Naive thymus-derived CD4-positive, alpha-beta T cell (primary cell): ENCODE measurements at regions of chr16 and their contacts with region 1.

Region 1: DNA sequence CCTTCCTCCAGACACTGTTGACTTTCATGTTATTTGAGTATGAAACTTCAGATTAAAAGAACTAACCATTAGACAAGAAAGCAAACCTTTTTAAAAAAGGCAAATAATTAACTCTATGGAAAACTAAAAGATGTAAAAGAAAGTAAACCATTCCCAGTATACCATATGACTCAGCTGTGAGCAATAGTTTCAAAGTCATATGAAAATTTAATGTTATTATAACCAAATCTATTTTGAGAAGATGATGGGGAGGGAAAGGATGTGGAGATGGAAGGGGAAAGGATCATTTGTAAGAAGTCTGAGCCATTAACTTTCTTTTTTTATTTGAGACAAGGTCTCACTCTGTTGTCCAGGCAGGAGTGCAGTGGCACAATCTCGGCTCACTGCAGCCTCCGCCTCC is 131.8 kb downstream of the IRX5 start:
- DNase-seq: no peak
- ATAC-seq: no peak
- H3K4me3 ChIP-seq: no peak overlapping the region
- H3K4me3 Mint-ChIP-seq: no peak overlapping the region
- H3K27ac ChIP-seq: no peak overlapping the region
- H3K27ac Mint-ChIP-seq: no peak overlapping the region
- H3K4me1 ChIP-seq: no peaks in the 10 kb centered on the region
- H3K4me1 Mint-ChIP-seq: no peaks in the 10 kb centered on the region
- H3K27me3 ChIP-seq: peaks cover 0 to 3% of the 10 kb centered on the region in 2 donors
- H3K27me3 Mint-ChIP-seq: peaks cover 20 to 48% (median 37%) of the 10 kb centered on the region in 5 donors

Region 2: GRCh38 chr16:55349867-55350266 is 287.4 kb after region 1 on chr16:
- CTCF ChIA-PET with region 1: no interaction called
- POLR2A ChIA-PET with region 1: no interaction called
- intact Hi-C with region 1: loop called in 1 of 2 experiments (anchors 5 kb)
- DNase-seq: no peak
- ATAC-seq: no peak
- H3K4me3 ChIP-seq: no peak overlapping the region
- H3K4me3 Mint-ChIP-seq: no peak overlapping the region
- H3K27ac ChIP-seq: no peak overlapping the region
- H3K27ac Mint-ChIP-seq: no peak overlapping the region
- H3K4me1 ChIP-seq: no peaks in the 10 kb centered on the region
- H3K4me1 Mint-ChIP-seq: no peaks in the 10 kb centered on the region
- H3K27me3 ChIP-seq: no peaks in the 10 kb centered on the region
- H3K27me3 Mint-ChIP-seq: peaks cover 0 to 44% (median 22%) of the 10 kb centered on the region in 5 donors